GM10248 (cell line): ENCODE measurements at regions of chr9 and their contacts with region 1.

Region 1: GRCh38 chr9:4984621-4985385 is at the start of gene JAK2:
- DNase-seq: peak; percentile 77
- CTCF ChIP-seq: peak; percentile 65

Region 2: DNA sequence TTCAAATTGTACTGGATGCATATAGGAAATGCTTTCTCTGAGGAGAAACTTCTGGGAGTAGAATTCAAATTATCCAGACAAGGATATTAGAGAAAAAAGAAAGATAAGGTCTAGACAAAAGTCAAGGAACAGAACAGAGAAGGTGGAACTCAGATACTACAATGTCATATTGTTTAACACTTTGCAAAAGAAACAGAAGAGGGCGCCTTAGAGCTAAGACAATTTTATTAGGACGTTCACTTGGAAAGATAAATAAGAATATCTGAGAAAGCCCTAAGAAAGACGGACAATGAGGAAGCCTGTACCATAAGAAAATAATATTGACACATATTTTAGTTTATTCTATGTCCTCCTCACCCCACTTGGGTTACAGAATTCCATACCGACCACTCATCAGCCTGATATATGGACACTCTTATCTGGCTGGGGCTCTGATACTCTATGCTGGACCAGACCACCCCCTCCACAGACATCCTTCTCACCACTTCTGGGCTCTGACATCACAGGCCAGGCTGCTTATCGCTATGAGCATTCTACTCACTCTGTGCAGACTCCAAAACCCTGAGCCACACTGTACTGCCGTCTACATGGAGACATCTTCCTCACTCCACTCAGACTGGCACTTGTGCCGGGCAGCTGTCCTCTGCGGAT is 234.7 kb before region 1 on chr9:
- CTCF ChIA-PET with region 1: interaction called, 14 read pairs
- POLR2A ChIA-PET with region 1: no interaction called
- DNase-seq: peak; percentile 36
- CTCF ChIP-seq: peak; percentile 61

Region 3: GRCh38 chr9:4837261-4838188 is 147.3 kb before region 1 on chr9:
- CTCF ChIA-PET with region 1: interaction called, 10 read pairs
- POLR2A ChIA-PET with region 1: no interaction called
- DNase-seq: no peak
- CTCF ChIP-seq: no peak

Region 4: DNA sequence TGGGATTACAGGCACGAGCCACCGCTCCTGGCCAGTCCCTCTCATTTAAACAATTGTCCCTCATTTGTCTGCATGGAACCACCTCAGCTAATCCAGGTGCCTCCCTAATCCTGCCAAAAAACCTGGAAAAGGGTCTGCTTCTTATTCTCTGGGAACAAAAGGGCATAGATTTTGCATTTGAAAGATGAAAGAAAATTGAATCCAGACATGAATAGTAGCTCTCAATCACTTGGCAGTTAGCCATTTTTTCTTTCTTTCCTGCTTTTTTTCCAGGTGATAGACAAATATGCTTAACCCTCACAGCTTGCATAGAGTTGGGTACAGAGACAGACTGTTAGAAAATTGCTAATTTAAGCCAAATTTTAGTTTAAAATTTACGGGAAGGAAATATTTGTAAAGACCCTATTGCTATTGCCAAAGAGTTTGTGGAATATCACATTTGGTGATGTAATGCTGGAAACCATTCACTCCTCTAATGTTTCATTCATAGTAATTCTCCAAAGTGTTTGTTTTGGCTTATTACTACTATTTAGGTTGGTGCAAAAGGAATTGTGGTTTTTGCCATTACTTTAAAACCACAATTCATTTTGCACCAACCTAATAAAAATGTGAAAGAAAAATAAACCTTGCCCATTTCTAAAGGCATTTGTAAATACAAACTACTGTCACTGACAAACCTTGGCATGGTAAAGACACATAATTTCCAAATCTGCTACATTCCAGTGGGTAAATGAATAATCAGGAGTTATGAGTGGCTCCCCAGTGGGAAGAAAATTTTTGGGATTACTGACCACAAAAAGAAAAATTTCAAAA is 80.3 kb before region 1 on chr9:
- CTCF ChIA-PET with region 1: no interaction called
- POLR2A ChIA-PET with region 1: no interaction called
- DNase-seq: no peak
- CTCF ChIP-seq: no peak

Region 5: DNA sequence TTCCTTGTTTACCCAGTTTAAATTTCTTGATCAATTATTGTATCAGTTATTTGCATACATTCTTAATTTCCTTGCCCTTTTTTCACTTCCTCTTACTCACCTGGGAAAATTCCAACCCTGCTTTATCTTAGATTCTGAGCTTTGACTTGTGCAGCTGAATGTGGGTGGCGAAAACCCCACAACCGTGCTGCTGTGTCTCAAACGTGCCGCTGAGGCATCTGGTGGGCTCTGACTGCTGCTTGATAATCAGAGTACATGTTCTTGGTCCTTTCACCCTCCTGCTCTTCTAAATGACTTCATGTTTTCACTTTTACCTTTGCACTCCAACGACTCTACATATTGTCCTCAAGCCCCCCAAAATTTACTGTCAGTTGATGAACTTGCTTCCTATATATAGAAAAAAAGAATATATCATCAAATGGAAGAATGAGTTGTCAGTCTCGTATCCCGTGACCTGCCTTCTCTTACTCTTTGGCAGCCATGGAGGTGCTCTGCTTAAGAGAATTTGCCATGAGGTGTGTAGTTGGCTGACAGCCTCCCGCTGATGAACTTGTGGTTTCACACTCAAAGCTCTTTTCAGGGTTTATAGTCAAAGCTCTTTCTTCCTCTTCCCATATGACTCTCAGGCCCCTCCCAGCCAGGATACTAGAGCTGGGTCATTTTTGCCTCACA is 13.7 kb before region 1 on chr9:
- CTCF ChIA-PET with region 1: interaction called, 12 read pairs
- POLR2A ChIA-PET with region 1: no interaction called
- DNase-seq: peak; percentile 65
- CTCF ChIP-seq: no peak

Region 6: DNA sequence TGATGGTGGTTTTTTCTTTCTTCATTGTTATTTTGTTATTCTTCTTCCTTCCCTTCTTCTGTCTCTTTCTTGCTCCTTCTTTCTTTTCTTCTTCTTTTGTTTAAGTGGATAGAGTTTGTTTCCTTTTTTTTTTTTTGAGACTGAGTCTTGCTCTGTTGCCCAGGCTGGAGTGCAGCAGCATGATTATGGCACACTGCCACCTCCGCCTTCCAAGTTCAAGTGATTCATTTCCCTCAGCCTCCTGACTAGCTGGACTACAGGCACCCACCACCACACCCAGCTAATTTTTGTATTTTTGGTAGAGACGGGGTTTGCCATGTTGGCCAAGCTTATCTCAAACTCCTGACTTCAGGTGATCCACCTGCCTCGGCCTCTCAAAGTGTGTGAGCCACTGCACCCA is 40.6 kb after region 1 on chr9:
- CTCF ChIA-PET with region 1: interaction called, 10 read pairs
- POLR2A ChIA-PET with region 1: no interaction called
- DNase-seq: no peak
- CTCF ChIP-seq: no peak